Dendritic cell treated with granulocyte-macrophage colony-stimulating factor and Interleukin-4, amounts not matched to agents 40 ng/mL and 50 ng/mL, for 4 days (primary cell): ENCODE measurements at regions of chr22 and their contacts with region 1.

Region 1: DNA sequence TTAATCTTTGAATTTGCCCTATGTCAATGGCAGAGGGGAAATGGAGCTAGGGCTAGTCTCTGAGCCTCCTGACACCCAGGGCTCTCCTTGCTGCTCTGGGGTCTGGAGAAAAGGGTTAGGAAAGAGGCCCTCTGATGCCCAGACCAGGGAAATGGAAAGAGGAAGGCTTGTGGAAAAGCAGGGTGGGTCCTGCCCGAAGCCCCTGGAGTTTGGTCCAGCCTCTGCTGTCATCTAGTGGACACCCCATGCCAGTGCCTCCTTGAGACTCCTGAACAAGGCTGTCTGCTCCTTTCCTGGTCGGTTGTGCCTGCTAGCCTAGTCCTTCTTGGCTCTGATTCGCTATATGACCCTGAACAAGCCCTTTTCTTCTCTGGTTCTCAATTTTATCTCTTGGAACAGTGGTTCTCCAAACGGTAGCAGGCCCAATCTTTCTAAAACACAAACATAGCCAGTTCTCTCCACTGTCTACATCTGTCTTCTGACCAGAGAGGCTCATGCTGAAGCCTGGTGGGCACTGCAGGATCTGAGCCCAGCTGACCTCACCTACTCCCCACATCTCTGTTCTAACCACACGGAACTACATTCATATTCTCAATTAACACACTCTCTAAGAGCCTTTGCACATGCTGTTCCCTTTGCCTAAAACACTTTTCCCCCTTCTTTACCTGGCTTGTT is 8.8 kb upstream of the PLA2G3 start:
- H3K4me3 Mint-ChIP-seq: no peak overlapping the region
- H3K27ac Mint-ChIP-seq: no peak overlapping the region
- H3K4me1 Mint-ChIP-seq: peaks cover 7% of the 10 kb centered on the region
- H3K27me3 Mint-ChIP-seq: peaks cover 5% of the 10 kb centered on the region

Region 2: GRCh38 chr22:30763815-30764686 is 385.0 kb before region 1 on chr22:
- intact Hi-C with region 1: loop called (anchors 5 kb)
- H3K4me3 Mint-ChIP-seq: no peak overlapping the region
- H3K27ac Mint-ChIP-seq: no peak overlapping the region
- H3K4me1 Mint-ChIP-seq: no peaks in the 10 kb centered on the region
- H3K27me3 Mint-ChIP-seq: no peaks in the 10 kb centered on the region

Region 3: GRCh38 chr22:30947816-30948454 is 201.2 kb before region 1 on chr22:
- intact Hi-C with region 1: loop called (anchors 5 kb)
- H3K4me3 Mint-ChIP-seq: no peak overlapping the region
- H3K27ac Mint-ChIP-seq: no peak overlapping the region
- H3K4me1 Mint-ChIP-seq: no peaks in the 10 kb centered on the region
- H3K27me3 Mint-ChIP-seq: no peaks in the 10 kb centered on the region

Region 4: DNA sequence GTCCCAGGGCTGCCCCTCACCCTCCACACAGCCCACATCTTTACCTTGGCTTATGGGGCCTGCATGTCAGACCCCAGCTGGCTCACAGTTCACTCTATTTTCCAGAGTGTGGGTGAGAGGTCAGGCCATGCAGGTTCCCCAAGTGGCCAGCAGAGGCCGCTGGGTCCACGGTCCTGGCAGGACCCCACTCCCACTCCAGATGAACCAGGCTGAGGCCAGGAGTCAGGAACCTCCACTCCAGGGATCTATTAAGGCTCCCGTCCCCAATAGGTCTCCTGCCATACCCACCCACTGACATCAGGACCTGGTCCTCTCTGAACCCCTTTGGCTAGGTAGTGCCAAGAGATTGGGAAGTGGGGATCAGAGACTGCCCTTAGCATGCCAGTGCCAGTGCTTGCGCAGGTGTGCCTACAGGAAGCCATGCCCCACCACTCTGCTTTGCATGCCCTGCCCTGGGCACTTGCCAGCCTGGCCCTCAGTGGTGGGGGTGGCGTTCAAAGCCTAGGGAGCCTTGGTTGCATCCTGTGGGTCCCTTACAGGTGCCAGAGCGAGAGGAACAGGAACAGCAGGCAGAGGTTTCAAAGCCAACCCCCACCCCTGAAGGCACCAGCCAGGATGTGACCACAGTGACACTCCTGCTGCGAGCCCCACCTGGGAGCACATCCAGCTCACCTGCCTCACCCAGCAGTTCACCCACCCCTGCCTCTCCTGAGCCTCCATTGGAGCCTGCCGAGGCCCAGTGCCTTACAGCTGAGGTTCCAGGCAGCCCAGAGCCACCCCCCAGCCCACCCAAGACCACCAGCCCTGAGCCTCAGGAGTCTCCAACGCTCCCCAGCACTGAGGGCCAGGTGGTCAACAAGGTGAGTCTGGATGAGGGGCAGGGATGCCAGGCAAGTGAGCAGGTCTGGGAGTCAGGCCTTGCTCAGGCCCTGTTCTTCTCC is 59.7 kb before region 1 on chr22:
- intact Hi-C with region 1: loop called (anchors 2 kb)
- H3K4me3 Mint-ChIP-seq: no peak overlapping the region
- H3K27ac Mint-ChIP-seq: no peak overlapping the region
- H3K4me1 Mint-ChIP-seq: peaks cover 15% of the 10 kb centered on the region
- H3K27me3 Mint-ChIP-seq: no peaks in the 10 kb centered on the region

Region 5: DNA sequence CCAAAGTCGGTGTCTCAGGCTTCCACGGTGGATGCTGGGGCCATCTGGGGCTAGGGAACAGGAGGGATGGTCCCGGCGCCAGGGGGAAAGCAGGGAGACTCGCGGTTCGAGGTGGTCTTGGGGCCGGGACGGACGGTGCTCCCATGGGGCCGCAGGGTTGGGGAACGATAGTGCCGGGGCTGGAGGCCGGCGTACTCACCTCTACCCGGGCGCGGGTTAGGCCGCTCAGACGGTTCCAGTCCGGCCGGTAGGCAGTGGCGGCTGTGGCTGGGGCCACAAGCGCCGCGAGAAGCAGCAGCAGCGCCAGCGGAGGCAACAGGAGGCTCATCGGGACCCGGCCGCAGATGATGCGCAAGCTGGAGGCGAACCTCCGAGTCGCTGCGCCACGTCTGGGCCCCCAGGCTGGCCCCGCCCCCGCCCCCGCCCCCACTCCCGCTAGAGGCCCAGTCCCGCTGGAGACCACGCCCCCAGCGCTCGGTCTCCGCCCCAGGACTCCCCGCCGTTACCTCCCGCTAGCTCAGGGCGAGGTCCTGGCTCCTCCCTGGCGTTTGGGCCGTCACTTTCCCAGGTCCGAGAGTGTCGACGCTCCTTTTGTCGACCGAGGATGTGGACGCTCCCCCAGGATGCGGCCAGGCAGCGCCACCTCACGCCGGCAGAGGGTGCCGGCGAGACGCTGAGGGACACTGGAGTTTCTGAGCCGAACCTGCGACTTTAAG is 41.8 kb before region 1 on chr22 and contains the start of gene SELENOM:
- intact Hi-C with region 1: loop called (anchors 5 kb)
- H3K4me3 Mint-ChIP-seq: peak within 1 kb of the TSS; percentile 75
- H3K27ac Mint-ChIP-seq: peak within 1 kb of the TSS; percentile 47
- H3K4me1 Mint-ChIP-seq: peaks cover 13% of the 10 kb centered on the region
- H3K27me3 Mint-ChIP-seq: peaks cover 22% of the 10 kb centered on the region

Region 6: GRCh38 chr22:31133911-31134310 is 15.2 kb before region 1 on chr22:
- intact Hi-C with region 1: no loop called
- H3K4me3 Mint-ChIP-seq: no peak overlapping the region
- H3K27ac Mint-ChIP-seq: no peak overlapping the region
- H3K4me1 Mint-ChIP-seq: no peaks in the 10 kb centered on the region
- H3K27me3 Mint-ChIP-seq: no peaks in the 10 kb centered on the region

Region 7: DNA sequence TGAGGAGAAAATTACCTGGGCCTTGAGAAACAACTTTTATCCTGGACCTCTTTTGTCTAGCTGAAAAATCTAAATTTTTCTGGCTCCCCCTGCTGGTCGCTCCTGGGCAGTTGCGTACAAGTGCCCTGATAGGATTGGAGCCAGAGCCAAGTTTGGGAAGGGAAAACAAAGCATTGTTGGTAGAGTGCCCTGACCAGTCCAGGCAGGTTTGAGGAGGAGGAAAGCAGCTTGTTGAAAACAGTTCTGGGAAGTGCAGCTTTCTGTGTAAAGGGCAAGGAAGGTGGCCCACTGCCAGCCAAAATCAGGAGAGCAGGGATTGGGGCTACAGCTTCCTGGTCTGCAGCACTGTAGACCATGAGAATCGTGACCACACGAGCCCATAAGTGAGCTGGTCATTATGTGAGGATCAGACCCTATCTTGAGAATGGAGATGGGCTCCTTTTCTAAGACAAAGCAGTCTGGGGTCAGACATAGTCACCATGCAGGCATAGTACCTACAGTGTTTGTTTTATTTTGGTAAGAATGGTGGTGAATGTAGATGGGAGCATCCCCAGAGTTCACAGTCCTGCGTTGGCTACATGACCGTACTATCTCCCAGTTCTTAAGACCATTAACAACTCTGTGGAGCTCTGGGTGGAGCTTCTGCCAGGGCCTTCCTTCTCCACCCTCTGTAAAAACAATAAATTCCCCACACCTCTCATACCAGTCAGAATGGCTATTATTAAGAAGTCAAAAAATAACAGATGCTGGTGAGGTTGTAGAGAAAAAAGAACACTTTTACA is 164.5 kb after region 1 on chr22:
- intact Hi-C with region 1: no loop called
- H3K4me3 Mint-ChIP-seq: no peak overlapping the region
- H3K27ac Mint-ChIP-seq: peak overlapping the region; percentile 19
- H3K4me1 Mint-ChIP-seq: peaks cover 6% of the 10 kb centered on the region
- H3K27me3 Mint-ChIP-seq: peaks cover 2% of the 10 kb centered on the region